GM10248 (cell line): ENCODE measurements at regions of chr17 and their contacts with region 1.

Region 1: GRCh38 chr17:29241015-29241963 is 5.4 kb upstream of the CRYBA1 start:
- DNase-seq: no peak
- CTCF ChIP-seq: no peak

Region 2: GRCh38 chr17:29252101-29252866 is 11.0 kb after region 1 on chr17:
- CTCF ChIA-PET with region 1: interaction called, 25 read pairs
- POLR2A ChIA-PET with region 1: no interaction called
- DNase-seq: no peak
- CTCF ChIP-seq: peak; percentile 13